ENCODE measurements at regions of chr4 and their contacts with region 1.

Region 1: GRCh38 chr4:26081795-26082498 is 167.9 kb downstream of the SMIM20 start:
- DNase-seq: no peak
- H3K4me3 ChIP-seq: no peak overlapping the region
- CTCF ChIP-seq: peak; percentile 30

Region 2: DNA sequence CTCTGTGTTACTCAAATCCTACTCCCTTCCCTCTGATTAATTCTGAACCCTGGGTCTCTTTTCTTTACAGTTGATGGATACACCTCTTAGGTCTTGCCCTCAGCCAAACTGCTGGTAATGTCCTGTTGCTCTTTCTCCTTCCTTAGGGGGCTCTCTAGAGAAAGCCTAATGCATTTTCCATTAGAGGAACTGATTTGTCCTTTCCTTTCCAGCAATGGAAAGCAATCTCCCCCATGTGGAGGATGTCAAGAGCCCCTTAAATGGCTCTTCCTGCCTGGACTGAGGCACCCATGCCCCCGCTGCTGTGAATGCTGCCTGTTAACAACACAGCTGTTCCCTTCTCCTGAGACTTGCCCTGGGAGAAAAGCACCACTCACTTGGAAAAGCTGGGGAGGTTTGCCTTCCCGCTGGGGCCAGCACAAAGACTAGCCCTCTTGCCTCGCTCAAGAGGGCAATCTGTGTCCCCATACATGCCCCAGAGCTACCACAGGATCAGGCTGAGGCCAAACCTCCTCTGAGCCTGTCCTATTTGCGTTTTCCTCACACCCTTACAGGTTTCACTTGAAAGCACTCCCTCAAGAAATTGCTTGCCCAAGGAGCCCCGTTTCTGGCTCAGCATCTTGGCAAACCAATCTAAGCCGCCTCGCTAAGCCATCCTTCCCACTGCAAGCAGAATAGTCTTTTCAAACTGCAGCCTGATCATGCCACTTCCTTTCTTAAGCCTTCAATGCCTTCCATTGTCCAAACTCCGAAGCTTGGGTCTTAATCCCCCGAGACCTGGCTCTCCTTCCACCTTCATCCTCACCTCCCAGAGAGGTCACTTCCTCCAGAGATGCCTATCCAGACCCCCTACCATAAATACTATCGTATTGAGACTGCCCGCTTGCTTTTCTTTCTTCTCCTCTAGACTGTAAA is 191.1 kb before region 1 on chr4:
- CTCF ChIA-PET with region 1: no interaction called
- POLR2A ChIA-PET with region 1: no interaction called
- DNase-seq: no peak
- H3K4me3 ChIP-seq: no peak overlapping the region
- CTCF ChIP-seq: no peak

Region 3: DNA sequence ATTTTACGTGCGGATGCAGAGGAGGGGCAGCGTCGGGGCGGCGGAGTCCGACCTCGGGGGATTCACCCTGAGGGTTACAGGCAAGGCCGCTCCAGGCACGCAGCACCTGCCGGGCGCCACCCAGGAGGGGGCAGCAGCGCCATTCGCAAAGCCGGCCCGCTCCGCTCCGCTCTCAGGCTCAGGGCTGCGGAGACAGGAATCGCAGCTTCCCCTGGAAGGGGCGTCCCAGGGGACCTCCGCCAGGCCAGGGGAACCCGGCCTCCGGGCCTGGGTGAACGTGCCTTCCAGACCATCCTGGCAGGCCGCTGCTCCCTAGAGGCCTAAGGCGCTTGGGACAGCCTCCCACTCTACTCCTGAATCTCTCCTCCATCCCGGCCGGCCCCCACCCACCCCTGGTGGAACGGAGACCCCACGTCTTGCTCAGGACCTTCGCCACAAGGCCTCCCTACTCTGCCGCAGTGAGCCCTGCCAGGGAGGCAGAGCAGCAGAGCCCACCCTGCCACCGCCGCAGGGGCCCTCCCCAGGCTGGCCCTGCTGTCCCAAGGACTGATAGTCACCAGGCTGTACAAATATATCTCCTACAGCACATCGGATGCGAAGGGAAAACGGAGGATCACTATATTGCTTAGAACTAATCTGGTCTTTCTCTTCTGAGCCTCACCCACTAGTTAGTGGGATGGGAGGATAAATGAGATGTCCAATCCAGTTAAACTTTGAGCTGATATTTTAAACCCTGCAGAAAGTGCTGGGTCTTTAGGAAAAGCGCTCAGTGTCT is 53.0 kb before region 1 on chr4:
- CTCF ChIA-PET with region 1: interaction called, 25 read pairs
- POLR2A ChIA-PET with region 1: interaction called, 3 read pairs
- DNase-seq: no peak
- H3K4me3 ChIP-seq: no peak overlapping the region
- CTCF ChIP-seq: peak; percentile 98

Region 4: DNA sequence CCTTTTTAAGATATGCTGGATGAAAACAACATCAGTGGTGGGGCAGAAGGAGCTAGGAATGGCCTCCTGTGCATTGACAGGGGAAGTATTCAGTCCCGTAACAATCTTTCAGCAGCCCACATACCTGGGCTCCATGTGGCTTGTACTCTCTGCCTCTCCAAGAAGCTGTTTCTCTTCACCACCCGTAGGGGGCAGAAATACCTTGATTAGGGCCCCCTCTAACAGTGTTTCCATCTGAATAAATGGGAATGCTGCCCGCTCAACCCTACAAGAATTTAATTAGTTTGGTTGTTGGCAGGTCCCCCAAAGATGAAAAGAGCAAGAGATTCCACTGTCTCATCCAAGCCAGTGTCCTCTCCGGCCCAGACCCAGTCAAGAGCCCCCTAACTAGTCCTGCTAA is 12.7 kb before region 1 on chr4:
- CTCF ChIA-PET with region 1: interaction called, 18 read pairs
- POLR2A ChIA-PET with region 1: no interaction called
- DNase-seq: no peak
- H3K4me3 ChIP-seq: no peak overlapping the region
- CTCF ChIP-seq: peak; percentile 25

Region 5: DNA sequence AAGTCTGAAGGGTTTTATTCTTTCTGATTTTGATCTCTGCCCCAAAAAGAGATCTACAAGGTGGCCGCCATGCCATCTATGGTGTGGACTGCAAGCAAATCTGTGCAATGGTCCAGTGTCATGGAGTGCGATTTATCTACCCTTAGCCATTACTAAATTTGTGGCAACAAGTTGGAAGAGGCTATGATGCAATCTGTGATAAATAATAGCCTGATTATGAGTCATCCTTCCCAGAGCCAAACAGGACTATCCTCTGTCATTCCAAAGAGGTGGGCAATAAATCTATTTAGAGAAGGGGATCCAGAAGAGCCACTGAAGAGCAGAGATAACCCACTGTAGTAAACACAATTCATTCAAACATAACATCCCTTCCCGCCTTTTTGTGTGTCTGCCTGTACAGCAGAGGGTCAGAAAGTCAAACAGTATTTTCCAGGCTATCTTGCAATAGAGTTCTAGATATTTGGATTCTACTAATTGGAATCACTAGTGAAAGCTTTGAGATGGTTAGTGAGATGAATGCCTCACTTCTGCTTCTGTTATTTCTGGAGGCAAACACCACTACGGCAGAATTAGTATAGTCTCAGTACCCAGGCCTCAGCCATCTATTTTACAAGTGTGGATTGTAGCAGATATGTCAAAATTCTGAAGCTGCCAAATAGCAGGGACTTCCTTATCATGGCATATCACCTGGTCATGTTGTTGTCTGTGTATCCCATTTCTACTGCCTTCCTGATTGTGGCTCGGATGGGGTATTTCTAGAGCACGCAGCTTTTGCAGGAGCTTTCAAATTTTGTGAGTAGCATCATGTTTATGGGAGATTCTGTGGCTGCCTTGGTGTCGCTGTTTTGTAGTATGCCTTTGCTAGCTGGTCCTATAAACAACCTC is 24.1 kb after region 1 on chr4:
- CTCF ChIA-PET with region 1: interaction called, 20 read pairs
- POLR2A ChIA-PET with region 1: no interaction called
- DNase-seq: no peak
- H3K4me3 ChIP-seq: no peak overlapping the region
- CTCF ChIP-seq: no peak

Region 6: DNA sequence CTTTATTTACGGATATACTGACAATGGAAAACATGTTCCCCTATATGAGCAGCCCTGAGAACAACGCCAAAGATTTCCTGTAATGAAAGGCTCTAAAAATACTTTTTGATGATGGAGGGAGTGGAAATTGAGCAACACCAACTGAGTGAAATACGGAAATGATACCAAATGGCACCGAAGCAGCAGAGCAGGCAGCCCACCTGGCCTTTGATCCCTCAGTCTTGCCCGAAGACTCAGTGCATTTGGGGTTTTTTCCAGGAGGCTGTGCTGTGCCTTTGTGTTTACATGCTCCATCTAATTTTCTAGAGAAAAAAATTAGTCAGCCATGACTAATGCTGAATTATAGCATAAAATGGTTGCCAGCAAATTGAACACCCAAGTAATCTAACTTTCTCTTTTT is 69.0 kb after region 1 on chr4:
- CTCF ChIA-PET with region 1: no interaction called
- POLR2A ChIA-PET with region 1: no interaction called
- DNase-seq: no peak
- H3K4me3 ChIP-seq: no peak overlapping the region
- CTCF ChIP-seq: no peak

Region 7: DNA sequence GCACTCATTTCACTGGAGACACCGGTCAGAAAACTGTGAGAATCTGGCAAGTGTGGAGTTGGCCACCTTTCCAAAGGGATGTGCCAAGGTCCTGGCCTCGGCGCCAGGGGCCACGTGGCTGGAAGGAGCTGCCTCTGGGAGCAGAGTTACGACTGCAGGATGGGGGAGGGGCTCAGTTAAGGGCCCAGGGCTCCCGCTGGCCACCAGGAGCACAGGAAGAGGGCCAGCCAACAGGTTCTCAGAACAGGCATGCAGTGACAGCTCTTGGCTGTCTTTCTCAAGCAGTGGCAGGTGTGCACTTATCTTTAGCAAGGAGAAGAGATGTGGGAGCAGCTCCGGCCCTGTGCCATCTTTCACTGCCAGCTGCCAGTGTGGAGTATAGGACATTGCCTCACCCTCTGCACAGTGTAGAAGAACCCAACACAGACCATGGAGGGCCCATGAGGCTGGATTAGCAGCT is 123.0 kb after region 1 on chr4:
- CTCF ChIA-PET with region 1: no interaction called
- POLR2A ChIA-PET with region 1: no interaction called
- DNase-seq: no peak
- H3K4me3 ChIP-seq: no peak overlapping the region
- CTCF ChIP-seq: no peak

Region 8: DNA sequence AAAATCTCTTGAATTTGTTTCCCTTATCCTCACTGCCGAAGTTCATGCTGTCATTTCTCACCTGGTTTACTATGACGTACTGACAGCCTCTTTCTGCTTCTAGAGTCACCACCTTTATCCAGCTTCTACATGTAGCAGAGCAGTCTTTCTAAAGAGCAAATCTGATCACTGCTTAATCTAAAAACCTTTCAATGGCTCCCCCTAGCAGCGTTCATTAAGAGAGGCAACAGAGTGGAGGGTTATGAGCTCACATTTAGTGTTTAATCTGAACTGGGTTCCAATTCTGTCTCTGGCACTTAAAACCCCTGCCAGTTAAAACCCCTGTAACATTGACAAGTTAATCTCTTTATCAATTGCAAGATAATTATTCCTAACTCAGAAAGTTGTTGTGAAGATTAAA is 243.2 kb after region 1 on chr4:
- CTCF ChIA-PET with region 1: interaction called, 25 read pairs
- POLR2A ChIA-PET with region 1: interaction called, 5 read pairs
- DNase-seq: no peak
- H3K4me3 ChIP-seq: no peak overlapping the region
- CTCF ChIP-seq: peak; percentile 40

Measured in AG04449 (cell line).